ENCODE measurements at regions of chr19 and their contacts with region 1.

Region 1: DNA sequence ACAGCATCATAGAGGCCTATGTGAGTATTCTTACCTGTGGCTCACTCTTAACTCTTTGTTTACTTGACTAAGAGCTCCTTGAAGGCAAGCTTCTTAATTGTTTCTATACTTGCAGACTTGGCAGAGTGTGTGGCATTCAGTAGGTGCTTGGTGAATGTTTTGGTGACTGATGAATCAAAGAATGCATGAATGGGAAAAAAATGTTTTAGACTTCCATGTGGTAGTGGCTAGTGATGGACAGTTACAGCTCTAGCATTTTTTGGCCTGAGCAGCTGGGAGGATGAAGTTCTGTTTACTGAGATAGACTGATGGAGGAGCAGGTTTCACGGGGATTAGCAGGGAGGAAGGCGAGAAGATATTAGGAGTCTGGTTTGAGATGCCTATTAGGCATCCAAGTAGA is 13.6 kb downstream of the HAS1 start:
- DNase-seq: no peak
- H3K4me3 ChIP-seq: no peak overlapping the region
- H3K27ac ChIP-seq: no peak overlapping the region
- H3K27me3 ChIP-seq: no peaks in the 10 kb centered on the region
- CTCF ChIP-seq: no peak

Region 2: GRCh38 chr19:51688672-51689571 is 21.2 kb before region 1 on chr19:
- CTCF ChIA-PET with region 1: no interaction called
- POLR2A ChIA-PET with region 1: interaction called, 10 read pairs
- DNase-seq: peak; percentile 85
- H3K4me3 ChIP-seq: peak overlapping the region; percentile 96
- H3K27ac ChIP-seq: peak overlapping the region; percentile 77
- H3K27me3 ChIP-seq: no peaks in the 10 kb centered on the region
- CTCF ChIP-seq: no peak

Region 3: DNA sequence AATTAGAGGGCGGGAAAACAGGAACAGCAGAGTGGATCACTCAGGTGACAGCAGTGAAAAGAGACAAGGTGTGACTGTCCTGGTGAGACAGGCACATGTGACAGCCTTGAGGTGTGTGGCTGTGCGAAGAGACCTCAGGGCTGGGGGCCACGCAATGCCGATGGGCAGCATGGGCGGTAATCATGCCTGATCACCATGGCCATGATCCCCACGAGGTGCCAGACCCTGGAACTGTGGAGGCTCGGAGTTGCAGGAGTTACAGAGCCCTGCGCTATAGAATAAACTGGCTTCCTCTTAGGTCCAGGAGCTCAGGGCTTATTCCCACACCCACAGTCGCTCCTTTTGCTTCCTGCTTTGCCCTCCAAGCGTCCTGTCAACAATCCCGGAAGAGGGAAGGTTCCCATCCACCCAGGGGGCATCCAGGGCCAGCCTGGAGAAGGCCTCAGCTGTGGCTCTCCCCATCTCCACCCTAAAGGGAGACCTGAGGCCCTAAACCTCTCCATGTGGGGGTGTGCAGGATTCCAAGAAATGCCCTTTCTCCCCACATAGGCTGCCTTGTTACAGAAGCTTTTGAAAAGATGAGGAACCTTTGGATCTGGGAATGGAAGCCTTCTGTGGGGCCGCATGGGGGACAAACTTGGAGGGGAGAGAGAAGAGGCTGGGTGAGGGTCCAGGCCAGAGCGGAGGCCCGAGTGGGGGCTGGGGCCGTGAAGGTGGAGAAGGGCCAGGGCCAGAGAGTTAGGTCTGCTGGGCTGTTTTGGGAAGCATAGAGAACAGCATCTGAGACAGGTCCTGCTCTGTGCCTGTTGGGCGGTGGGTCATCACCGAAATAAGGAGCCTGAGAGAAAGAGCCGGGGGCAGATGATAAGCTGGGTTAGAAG is 14.8 kb before region 1 on chr19:
- CTCF ChIA-PET with region 1: interaction called, 11 read pairs
- POLR2A ChIA-PET with region 1: interaction called, 7 read pairs
- DNase-seq: no peak
- H3K4me3 ChIP-seq: no peak overlapping the region
- H3K27ac ChIP-seq: peak overlapping the region; percentile 31
- H3K27me3 ChIP-seq: no peaks in the 10 kb centered on the region
- CTCF ChIP-seq: no peak

Region 4: DNA sequence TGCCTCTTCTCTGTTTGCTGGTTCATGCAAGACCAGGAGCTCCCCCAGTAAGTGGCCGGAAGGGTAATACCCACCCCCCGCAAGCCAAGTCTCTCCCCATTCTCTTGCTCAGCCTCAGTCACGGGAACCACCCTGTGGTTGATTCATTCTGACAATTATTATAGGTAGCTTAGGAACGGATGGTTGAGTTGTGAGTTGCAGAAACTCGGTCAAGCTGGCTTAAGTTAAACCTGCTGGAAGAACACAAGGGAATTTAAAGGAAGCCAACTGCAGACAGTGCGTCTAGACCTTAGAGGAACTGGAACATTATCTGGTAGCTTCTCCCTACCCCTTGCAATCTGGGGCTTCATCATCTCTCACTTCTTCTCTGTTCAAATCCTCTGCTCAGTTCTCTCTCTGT is 32.6 kb after region 1 on chr19:
- CTCF ChIA-PET with region 1: no interaction called
- POLR2A ChIA-PET with region 1: no interaction called
- DNase-seq: no peak
- H3K4me3 ChIP-seq: no peak overlapping the region
- H3K27ac ChIP-seq: no peak overlapping the region
- H3K27me3 ChIP-seq: no peaks in the 10 kb centered on the region
- CTCF ChIP-seq: no peak